Activated naive CD4-positive, alpha-beta T cell treated with anti-CD3 and anti-CD28 coated beads for 36 hours (primary cell): ENCODE measurements at regions of chrX and their contacts with region 1.

Region 1: GRCh38 chrX:74614093-74614909 is at the start of gene RLIM:
- DNase-seq: peak; percentile 94
- H3K4me3 Mint-ChIP-seq: peak within 1 kb of the TSS; percentile 98
- H3K27ac Mint-ChIP-seq: peak within 1 kb of the TSS; percentile 100
- H3K4me1 Mint-ChIP-seq: peaks cover 19% of the 10 kb centered on the region
- H3K27me3 Mint-ChIP-seq: no peaks in the 10 kb centered on the region
- total RNA-seq, gene RLIM: 41.8 to 43.5 TPM

Region 2: GRCh38 chrX:73562984-73563737 is 1051.1 kb before region 1 on chrX and contains the start of gene CHIC1:
- CTCF ChIA-PET with region 1: no interaction called
- intact Hi-C with region 1: loop called (anchors 2 kb)
- DNase-seq: peak; percentile 75
- H3K4me3 Mint-ChIP-seq: peak within 1 kb of the TSS; percentile 100
- H3K27ac Mint-ChIP-seq: peak within 1 kb of the TSS; percentile 93
- H3K4me1 Mint-ChIP-seq: peaks cover 13% of the 10 kb centered on the region
- H3K27me3 Mint-ChIP-seq: no peaks in the 10 kb centered on the region
- total RNA-seq, gene CHIC1: 3.5 to 4.5 TPM

Region 3: GRCh38 chrX:74340051-74340450 is 274.2 kb before region 1 on chrX:
- CTCF ChIA-PET with region 1: no interaction called
- intact Hi-C with region 1: no loop called
- DNase-seq: no peak
- H3K4me3 Mint-ChIP-seq: no peak overlapping the region
- H3K27ac Mint-ChIP-seq: no peak overlapping the region
- H3K4me1 Mint-ChIP-seq: peaks cover 4% of the 10 kb centered on the region
- H3K27me3 Mint-ChIP-seq: no peaks in the 10 kb centered on the region

Region 4: DNA sequence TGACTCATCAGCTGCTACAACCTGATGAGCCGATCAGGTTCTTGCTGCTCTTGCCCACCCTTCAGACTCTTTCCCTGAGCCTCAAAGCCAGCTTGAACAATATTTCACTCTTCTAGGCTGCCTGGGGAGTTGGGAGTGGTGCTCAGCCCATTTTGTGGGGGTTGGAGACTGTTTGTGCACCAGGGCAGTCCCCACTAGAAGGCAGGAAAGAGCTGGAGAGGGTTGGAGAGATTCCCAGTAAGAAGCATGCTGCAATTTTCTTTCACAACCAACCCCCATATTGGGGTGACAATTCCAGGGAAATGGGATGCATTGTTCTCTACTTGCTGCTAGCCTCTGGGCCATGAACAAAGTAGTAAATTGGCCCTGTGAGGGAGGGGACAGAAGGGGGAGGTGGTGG is 148.9 kb before region 1 on chrX:
- CTCF ChIA-PET with region 1: no interaction called
- intact Hi-C with region 1: no loop called
- DNase-seq: no peak
- H3K4me3 Mint-ChIP-seq: no peak overlapping the region
- H3K27ac Mint-ChIP-seq: no peak overlapping the region
- H3K4me1 Mint-ChIP-seq: no peaks in the 10 kb centered on the region
- H3K27me3 Mint-ChIP-seq: no peaks in the 10 kb centered on the region

Region 5: GRCh38 chrX:74536152-74536831 is 78.0 kb before region 1 on chrX:
- CTCF ChIA-PET with region 1: no interaction called
- intact Hi-C with region 1: loop called (anchors 2 kb)
- DNase-seq: peak; percentile 40
- H3K4me3 Mint-ChIP-seq: peak overlapping the region; percentile 73
- H3K27ac Mint-ChIP-seq: peak overlapping the region; percentile 2
- H3K4me1 Mint-ChIP-seq: peaks cover 20% of the 10 kb centered on the region
- H3K27me3 Mint-ChIP-seq: no peaks in the 10 kb centered on the region

Region 6: DNA sequence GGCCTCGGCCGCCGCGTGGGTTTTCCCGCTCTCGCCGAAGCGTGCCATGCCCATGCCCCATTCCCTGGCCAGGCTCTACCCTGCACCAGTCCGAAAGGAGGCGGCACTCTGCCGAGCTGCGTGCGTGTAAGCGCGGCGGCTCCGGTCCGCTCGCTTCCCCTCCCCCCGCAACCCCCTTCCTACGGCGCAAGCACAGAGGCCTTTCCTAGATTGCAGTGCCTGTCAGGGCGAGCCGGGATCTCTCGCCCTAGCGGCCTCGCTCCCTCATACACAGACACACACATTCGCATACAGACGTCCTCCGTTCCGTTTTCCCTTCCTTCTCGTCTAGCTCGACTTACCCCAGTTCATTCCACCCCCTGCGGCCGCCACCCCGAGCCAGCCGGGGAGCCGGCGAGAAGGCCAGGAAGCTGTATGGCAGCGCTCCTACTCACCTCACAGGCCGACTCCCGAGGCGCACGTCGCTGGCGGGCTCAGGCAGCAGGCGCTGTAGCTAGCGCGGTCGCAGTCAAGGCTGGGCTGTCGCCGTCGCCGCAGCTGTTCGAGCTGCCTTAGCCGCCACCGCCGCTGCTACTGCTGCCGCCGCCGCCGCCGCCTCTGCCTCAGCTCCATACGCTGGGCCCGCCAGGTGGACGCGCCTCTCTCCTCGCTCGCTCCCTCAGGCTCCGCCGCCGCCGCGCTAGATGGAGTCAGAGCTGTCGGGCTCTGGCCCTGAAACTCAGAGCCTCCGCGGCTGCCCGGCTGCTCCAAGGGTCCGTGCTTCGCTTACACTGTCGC is 310.3 kb after region 1 on chrX:
- CTCF ChIA-PET with region 1: no interaction called
- intact Hi-C with region 1: loop called (anchors 1 kb)
- DNase-seq: peak; percentile 47
- H3K4me3 Mint-ChIP-seq: peak overlapping the region; percentile 95
- H3K27ac Mint-ChIP-seq: peak overlapping the region; percentile 87
- H3K4me1 Mint-ChIP-seq: peaks cover 6% of the 10 kb centered on the region
- H3K27me3 Mint-ChIP-seq: peaks cover 5% of the 10 kb centered on the region

Region 7: DNA sequence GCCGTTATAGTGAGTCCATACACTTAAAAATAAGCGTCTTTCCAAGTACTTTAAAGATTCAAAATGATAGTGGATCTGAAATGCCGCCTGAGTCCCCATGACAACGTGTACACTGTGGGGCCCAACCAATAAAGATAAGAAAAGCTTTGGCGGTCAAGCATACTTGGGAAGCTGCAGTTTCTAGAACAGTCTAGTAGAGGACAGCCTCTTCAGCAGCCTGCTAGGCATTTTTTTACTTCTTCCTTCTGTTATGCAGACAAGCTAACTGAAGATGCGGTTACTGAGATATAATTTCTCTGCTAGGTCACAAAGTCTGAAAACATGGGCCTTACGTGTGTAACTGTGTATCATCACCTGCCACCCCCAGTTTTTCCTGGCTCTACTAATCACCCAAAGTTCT is 659.2 kb after region 1 on chrX:
- CTCF ChIA-PET with region 1: no interaction called
- intact Hi-C with region 1: loop called (anchors 1 kb)
- DNase-seq: peak; percentile 26
- H3K4me3 Mint-ChIP-seq: peak overlapping the region; percentile 85
- H3K27ac Mint-ChIP-seq: peak overlapping the region; percentile 91
- H3K4me1 Mint-ChIP-seq: peaks cover 43% of the 10 kb centered on the region
- H3K27me3 Mint-ChIP-seq: no peaks in the 10 kb centered on the region

Region 8: GRCh38 chrX:76148753-76149152 is 1534.5 kb after region 1 on chrX:
- CTCF ChIA-PET with region 1: no interaction called
- intact Hi-C with region 1: loop called (anchors 5 kb)
- DNase-seq: peak; percentile 59
- H3K4me3 Mint-ChIP-seq: peak overlapping the region; percentile 80
- H3K27ac Mint-ChIP-seq: peak overlapping the region; percentile 98
- H3K4me1 Mint-ChIP-seq: peaks cover 9% of the 10 kb centered on the region
- H3K27me3 Mint-ChIP-seq: no peaks in the 10 kb centered on the region